ENCODE measurements at regions of chr13 and their contacts with region 1.

Region 1: DNA sequence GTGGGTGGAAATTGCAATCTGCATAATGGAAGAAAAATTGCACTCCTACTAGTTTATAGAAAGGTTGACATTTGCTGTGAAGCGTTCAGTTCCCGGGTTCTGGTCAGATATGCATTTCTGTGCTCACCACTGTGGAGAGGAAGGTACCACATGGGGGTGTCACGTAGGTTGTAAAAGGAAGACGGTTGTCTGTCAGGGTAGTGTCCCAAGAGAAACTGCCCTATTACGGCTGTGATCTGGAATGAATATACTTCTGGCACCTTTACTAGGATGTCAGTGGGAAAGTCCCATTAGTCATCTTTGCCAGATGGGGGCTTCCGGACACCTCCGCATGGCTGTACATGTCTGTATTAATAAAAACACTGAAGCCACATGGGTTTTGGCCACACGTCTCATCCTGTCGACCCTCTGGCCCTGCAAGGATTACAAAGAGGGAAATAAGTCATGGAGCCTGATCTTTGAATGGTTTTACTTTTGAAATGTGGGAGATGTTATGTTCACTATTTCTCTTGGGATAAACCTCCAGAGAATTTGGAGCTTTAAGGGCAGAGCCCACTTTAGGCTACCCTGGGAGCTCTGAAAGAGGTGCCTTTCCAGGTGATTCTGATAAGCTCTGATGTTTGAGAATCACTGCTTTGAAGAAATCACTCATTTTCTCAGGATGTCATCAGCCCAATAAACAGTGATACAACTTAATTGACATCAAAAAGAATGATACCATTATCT is 133.9 kb downstream of the AKAP11 start:
- DNase-seq: peak; percentile 97
- ATAC-seq: peak; percentile 90
- H3K4me3 ChIP-seq: peak overlapping the region; percentile 31; the same call in 1 of the 2 replicates
- H3K27ac ChIP-seq: peak overlapping the region; percentile 98
- H3K4me1 ChIP-seq: peaks cover 54% of the 10 kb centered on the region
- H3K27me3 ChIP-seq: no peaks in the 10 kb centered on the region
- CTCF ChIP-seq: 0 out of 6 replicates have a peak, but pooled peaks of 1 of the 3 experiments have one; percentile 5
- EP300 ChIP-seq: peak; percentile 86 to 97
- POLR2A ChIP-seq: peak; percentile 48; the same call in 1 of the 2 replicates
- RAD21 ChIP-seq: peak; percentile 45

Region 2: GRCh38 chr13:42392716-42393572 is 12.9 kb before region 1 on chr13:
- CTCF ChIA-PET with region 1: interaction called, 21 read pairs
- POLR2A ChIA-PET with region 1: interaction called, 19 read pairs
- RAD21 ChIA-PET with region 1: interaction called, 9 read pairs
- SMC1A ChIA-PET with region 1: interaction called, 91 read pairs
- in situ Hi-C with region 1: no loop called
- intact Hi-C with region 1: no loop called
- DNase-seq: no peak
- ATAC-seq: peak; percentile 33; the same call in 2 of the 3 replicates
- H3K4me3 ChIP-seq: no peak overlapping the region
- H3K27ac ChIP-seq: peak overlapping the region; percentile 85
- H3K4me1 ChIP-seq: peaks cover 56% of the 10 kb centered on the region
- H3K27me3 ChIP-seq: no peaks in the 10 kb centered on the region
- CTCF ChIP-seq: no peak
- EP300 ChIP-seq: no peak
- POLR2A ChIP-seq: no peak
- RAD21 ChIP-seq: peak; percentile 18; the same call in 1 of the 2 replicates

Region 3: GRCh38 chr13:42420304-42420703 is 14.5 kb after region 1 on chr13:
- CTCF ChIA-PET with region 1: interaction called, 4 read pairs
- POLR2A ChIA-PET with region 1: no interaction called
- RAD21 ChIA-PET with region 1: interaction called, 11 read pairs
- SMC1A ChIA-PET with region 1: interaction called, 33 read pairs
- in situ Hi-C with region 1: no loop called
- intact Hi-C with region 1: loop called (anchors 1 kb)
- DNase-seq: peak; percentile 68
- ATAC-seq: peak; percentile 95
- H3K4me3 ChIP-seq: no peak overlapping the region
- H3K27ac ChIP-seq: peak overlapping the region; percentile 50; the same call in 1 of the 2 replicates
- H3K4me1 ChIP-seq: peaks cover 32% of the 10 kb centered on the region
- H3K27me3 ChIP-seq: no peaks in the 10 kb centered on the region
- CTCF ChIP-seq: no peak
- EP300 ChIP-seq: peak in 1 of 2 experiments; percentile 64; a peak in 1 of 4 replicates
- POLR2A ChIP-seq: no peak
- RAD21 ChIP-seq: no peak; the same call in 1 of the 2 replicates

Region 4: GRCh38 chr13:42497798-42498197 is 92.0 kb after region 1 on chr13:
- CTCF ChIA-PET with region 1: interaction called, 3 read pairs
- POLR2A ChIA-PET with region 1: no interaction called
- RAD21 ChIA-PET with region 1: interaction called, 4 read pairs
- SMC1A ChIA-PET with region 1: interaction called, 6 read pairs
- in situ Hi-C with region 1: no loop called
- intact Hi-C with region 1: loop called (anchors 1 kb)
- DNase-seq: peak; percentile 88
- ATAC-seq: peak; percentile 90
- H3K4me3 ChIP-seq: no peak overlapping the region
- H3K27ac ChIP-seq: peak overlapping the region; percentile 85
- H3K4me1 ChIP-seq: peaks cover 33% of the 10 kb centered on the region
- H3K27me3 ChIP-seq: no peaks in the 10 kb centered on the region
- CTCF ChIP-seq: no peak
- EP300 ChIP-seq: peak in 1 of 2 experiments; percentile 69; a peak in 1 of 4 replicates
- POLR2A ChIP-seq: no peak
- RAD21 ChIP-seq: peak; percentile 36; the same call in 1 of the 2 replicates

Measured in GM12878 (cell line).